HCT116 (cell line): ENCODE measurements at regions of chr10 and their contacts with region 1.

Region 1: DNA sequence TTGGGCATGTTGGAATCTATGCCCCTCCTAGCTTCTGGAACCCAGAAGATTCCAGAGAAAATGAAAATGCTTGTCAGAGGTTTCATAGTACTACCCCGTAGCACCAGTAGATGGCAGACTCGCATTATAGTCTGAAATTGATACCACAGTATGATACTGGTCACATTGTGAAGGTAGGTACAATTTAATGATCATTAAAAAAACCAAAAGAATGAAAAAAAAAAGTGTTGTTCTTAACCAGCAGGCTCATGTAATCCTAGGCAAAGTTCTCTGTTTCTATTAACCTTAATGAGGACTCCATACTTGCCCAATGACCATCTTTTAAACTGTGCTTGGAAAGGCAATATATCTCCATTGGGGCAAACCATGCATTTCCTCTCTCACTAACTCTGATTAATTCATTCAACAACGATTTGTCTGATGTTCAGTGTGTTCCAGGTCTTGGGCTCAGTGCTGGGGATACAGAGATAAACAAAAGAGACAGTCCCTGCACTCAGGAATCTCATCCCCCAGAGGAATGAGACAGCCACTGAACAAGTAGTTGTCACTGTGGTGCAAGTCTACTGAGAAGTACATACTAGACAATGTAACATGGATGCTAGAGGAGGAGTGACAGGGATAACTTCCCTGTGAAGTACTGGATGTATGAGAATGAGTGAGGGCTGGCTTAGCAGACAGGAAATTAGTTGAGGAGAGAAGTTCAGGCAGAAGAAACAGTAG is 223.5 kb upstream of the PHYHIPL start:
- DNase-seq: peak; percentile 24
- ATAC-seq: peak; percentile 76
- H3K4me3 ChIP-seq: no peak overlapping the region
- H3K27ac ChIP-seq: no peak overlapping the region
- H3K4me1 ChIP-seq: peaks cover 3 to 27% of the 10 kb centered on the region in 2 experiments; a peak in 3 of 4 replicates
- H3K27me3 ChIP-seq: no peaks in the 10 kb centered on the region
- CTCF ChIP-seq: peak; percentile 50 to 81 (median 61); a peak in 5 of 6 replicates
- POLR2A ChIP-seq: no peak
- RAD21 ChIP-seq: peak; percentile 72

Region 2: DNA sequence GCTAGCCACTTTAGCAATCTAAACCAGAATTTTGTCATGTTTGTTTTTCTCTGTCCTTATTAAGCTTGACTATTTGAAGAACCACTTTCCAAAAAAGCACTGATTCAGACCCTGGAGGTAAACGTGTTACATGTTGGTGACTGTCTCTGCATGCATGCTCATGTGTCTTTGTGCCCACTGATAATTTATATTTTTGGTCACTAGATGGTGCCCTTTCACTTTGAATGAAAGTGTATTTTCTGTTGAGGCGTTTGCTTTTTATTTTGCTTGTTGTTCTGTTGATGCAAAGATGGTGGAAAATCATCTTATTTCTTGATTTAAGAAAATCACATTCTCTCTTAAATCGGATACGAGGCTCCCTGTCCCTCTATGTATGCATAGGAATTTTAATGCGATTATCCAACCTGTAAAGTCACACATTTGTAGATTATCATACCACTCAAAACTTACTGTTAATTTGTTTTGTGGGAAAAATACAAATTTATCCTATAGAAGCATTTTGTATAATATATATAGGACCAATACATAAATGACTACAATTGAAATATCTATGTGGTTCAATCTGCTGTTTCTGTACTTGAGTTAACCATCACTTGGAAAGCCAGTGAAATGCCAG is 170.9 kb before region 1 on chr10:
- CTCF ChIA-PET with region 1: interaction called, 3 read pairs
- POLR2A ChIA-PET with region 1: no interaction called
- RAD21 ChIA-PET with region 1: no interaction called
- intact Hi-C with region 1: loop called (anchors 10 kb)
- DNase-seq: peak; percentile 47
- ATAC-seq: peak; percentile 82
- H3K4me3 ChIP-seq: no peak overlapping the region
- H3K27ac ChIP-seq: no peak overlapping the region
- H3K4me1 ChIP-seq: no peaks in the 10 kb centered on the region
- H3K27me3 ChIP-seq: no peaks in the 10 kb centered on the region
- CTCF ChIP-seq: peak; percentile 40 to 74 (median 60); a peak in 4 of 6 replicates
- POLR2A ChIP-seq: no peak
- RAD21 ChIP-seq: peak; percentile 79

Region 3: DNA sequence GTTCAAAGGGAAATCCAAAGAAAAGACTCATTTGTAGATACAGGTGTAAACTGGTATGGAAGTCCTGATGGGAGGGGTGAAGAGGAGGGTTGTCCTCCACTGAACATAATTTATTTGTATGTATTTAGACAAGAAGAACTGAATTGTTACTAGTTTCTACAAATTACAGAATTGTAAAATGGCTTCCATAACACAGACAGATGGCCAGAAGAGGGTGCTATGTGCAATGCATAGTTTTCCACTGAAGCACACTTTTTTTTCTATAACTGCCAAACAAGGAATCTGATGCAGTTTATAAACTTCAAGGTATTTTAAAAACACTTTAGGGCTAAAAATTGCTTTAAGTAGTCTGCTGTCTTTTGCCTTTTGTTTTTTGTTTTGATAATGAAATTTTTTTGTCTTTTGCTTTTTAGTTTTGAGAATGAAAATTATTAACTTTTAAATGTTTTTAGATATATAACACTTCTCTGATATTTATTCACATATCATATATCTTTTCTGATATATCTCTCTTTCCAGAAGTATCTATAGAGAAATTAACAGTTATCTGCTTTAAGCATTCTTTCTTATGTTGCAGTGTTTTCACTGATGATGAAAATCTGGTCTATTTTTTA is 282.0 kb after region 1 on chr10:
- CTCF ChIA-PET with region 1: interaction called, 5 read pairs
- POLR2A ChIA-PET with region 1: no interaction called
- RAD21 ChIA-PET with region 1: no interaction called
- intact Hi-C with region 1: loop called (anchors 1 kb)
- DNase-seq: peak; percentile 44
- ATAC-seq: peak; percentile 66
- H3K4me3 ChIP-seq: no peak overlapping the region
- H3K27ac ChIP-seq: no peak overlapping the region
- H3K4me1 ChIP-seq: no peaks in the 10 kb centered on the region; a peak in 1 of 4 replicates
- H3K27me3 ChIP-seq: no peaks in the 10 kb centered on the region
- CTCF ChIP-seq: peak; percentile 37 to 75 (median 70); a peak in 5 of 6 replicates
- POLR2A ChIP-seq: no peak
- RAD21 ChIP-seq: peak; percentile 52

Region 4: DNA sequence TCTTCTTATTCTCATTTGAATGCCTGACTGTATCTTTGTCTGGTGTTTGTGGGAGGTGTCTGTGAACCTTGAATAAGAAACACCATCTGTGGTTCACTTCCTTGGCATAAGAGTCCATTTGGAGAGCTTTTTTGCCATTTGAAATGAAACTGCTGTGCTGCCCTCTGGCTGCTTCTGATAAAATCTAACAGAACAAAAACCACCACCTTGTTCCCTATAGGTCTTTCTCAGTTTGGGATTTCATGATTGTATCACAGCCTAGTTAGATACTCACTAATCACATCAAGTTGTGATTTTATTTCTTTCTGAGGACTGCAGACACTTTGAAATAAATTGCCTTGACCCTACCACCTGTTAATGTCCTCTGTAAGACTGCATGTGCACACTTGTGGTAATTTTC is 512.2 kb after region 1 on chr10:
- CTCF ChIA-PET with region 1: no interaction called
- POLR2A ChIA-PET with region 1: no interaction called
- RAD21 ChIA-PET with region 1: no interaction called
- intact Hi-C with region 1: loop called (anchors 10 kb)
- DNase-seq: no peak
- ATAC-seq: peak; percentile 60; the same call in 1 of the 2 replicates
- H3K4me3 ChIP-seq: no peak overlapping the region
- H3K27ac ChIP-seq: no peak overlapping the region
- H3K4me1 ChIP-seq: no peaks in the 10 kb centered on the region
- H3K27me3 ChIP-seq: 0 out of 2 replicates have a peak, but pooled peaks cover 7% of the 10 kb centered on the region
- CTCF ChIP-seq: peak; percentile 24 to 36 (median 33); a peak in 3 of 6 replicates
- POLR2A ChIP-seq: no peak
- RAD21 ChIP-seq: peak; percentile 51

Region 5: DNA sequence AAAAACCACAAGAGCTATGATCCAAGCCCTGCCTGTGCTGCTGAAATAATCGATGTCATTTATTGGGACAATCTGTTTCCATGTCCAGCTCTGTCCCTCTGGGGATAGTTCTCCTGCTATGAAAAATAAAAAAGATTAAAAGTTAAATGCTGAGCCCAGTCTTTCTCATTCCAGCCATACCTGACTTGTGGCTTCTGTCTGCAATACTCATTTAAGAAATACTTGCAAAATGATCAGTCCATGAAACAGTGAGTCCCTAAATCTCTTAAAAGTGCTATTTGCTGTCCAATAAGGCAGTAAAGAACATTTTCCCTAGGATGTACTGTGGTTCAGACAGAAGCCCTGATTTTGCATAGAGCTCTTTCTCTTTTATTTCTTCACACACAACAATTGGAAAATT is 665.1 kb after region 1 on chr10:
- CTCF ChIA-PET with region 1: interaction called, 12 read pairs
- POLR2A ChIA-PET with region 1: no interaction called
- RAD21 ChIA-PET with region 1: no interaction called
- intact Hi-C with region 1: loop called (anchors 2 kb)
- DNase-seq: no peak
- ATAC-seq: no peak
- H3K4me3 ChIP-seq: no peak overlapping the region
- H3K27ac ChIP-seq: no peak overlapping the region
- H3K4me1 ChIP-seq: no peaks in the 10 kb centered on the region
- H3K27me3 ChIP-seq: no peaks in the 10 kb centered on the region
- CTCF ChIP-seq: no peak
- POLR2A ChIP-seq: no peak
- RAD21 ChIP-seq: no peak